ENCODE measurements at regions of chr1 and their contacts with region 1.

Region 1: GRCh38 chr1:55860326-55860725 is 645.2 kb upstream of the USP24 start:
- DNase-seq: no peak
- H3K4me3 ChIP-seq: no peak overlapping the region
- H3K27ac ChIP-seq: no peak overlapping the region
- H3K4me1 ChIP-seq: no peaks in the 10 kb centered on the region
- H3K27me3 ChIP-seq: no peaks in the 10 kb centered on the region
- CTCF ChIP-seq: no peak

Region 2: DNA sequence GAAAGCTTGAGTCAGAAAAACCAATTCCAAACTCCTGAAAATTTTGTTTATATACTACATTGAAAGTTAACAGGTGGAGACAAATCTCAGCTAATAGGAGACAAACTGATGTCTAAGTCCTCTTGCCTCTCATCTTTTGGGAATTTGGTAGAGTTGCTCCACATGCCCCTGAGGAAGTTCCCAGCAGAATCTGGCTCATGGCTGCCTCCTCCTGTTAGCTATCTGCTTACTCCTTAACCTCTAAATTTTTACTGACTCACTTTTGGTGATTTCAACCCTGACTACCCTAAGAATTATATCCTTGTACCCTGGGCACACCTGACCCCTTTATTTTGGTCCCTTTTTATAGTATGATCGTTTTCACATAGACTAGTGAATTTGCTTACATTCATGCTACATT is 11.4 kb before region 1 on chr1:
- CTCF ChIA-PET with region 1: no interaction called
- POLR2A ChIA-PET with region 1: interaction called, 14 read pairs
- intact Hi-C with region 1: no loop called
- DNase-seq: no peak
- H3K4me3 ChIP-seq: no peak overlapping the region
- H3K27ac ChIP-seq: no peak overlapping the region
- H3K4me1 ChIP-seq: no peaks in the 10 kb centered on the region
- H3K27me3 ChIP-seq: no peaks in the 10 kb centered on the region
- CTCF ChIP-seq: peak; percentile 42